Heart left ventricle (tissue), 16 donors: ENCODE measurements at regions of chr12 and their contacts with region 1.

Region 1: DNA sequence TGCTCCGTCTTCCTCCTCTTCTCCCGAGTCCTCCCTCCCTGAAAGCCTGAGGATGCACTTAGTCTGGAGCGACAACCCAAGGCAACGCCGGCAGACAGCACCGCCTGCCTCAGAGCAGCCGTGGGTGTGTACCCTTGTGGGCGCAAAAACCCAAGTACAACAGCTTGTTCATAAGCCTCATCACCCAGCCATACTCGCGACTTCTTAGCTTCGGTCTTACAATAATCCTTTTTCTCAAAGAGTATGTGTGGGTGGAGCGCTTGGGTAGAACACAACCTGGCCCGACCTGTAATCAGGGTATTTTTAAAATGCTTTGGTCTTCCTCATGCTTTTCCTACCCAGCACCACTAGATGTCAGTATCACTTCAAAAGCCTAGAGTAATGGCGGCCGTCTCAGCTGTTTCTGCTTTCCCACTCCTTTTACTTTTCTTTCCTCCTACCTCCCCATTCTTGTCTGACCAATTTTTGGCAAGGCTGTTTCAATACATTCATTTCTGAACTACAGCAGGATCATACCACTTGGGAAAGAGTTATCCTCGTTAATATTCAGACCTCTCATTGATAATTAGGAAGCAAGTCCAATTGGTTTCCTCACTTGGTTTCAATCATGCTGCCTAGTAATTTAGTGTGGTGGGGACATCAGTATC is 198.9 kb downstream of the EPS8 start:
- DNase-seq: peak; percentile 28 to 54 (median 36)
- ATAC-seq: peak; percentile 61 to 90 (median 89)
- H3K4me3 ChIP-seq: peak overlapping the region in 9 of 12 donors; percentile 22 to 47 (median 36)
- H3K27ac ChIP-seq: peak overlapping the region in 6 of 12 donors; percentile 5 to 60 (median 38)
- H3K4me1 ChIP-seq: peaks cover 0 to 8% (median 0%) of the 10 kb centered on the region in 12 donors
- H3K27me3 ChIP-seq: no peaks in the 10 kb centered on the region
- CTCF ChIP-seq: peak; percentile 83 to 98 (median 90)
- POLR2A ChIP-seq: no peak

Region 2: GRCh38 chr12:15151161-15152120 is 438.9 kb before region 1 on chr12:
- intact Hi-C with region 1: no loop called
- DNase-seq: peak in 1 of 5 donors; percentile 20
- ATAC-seq: peak; percentile 48 to 75 (median 60)
- H3K4me3 ChIP-seq: no peak overlapping the region
- H3K27ac ChIP-seq: peak overlapping the region in 8 of 12 donors; percentile 11 to 69 (median 46)
- H3K4me1 ChIP-seq: peaks cover 0 to 27% (median 7%) of the 10 kb centered on the region in 12 donors
- H3K27me3 ChIP-seq: no peaks in the 10 kb centered on the region
- CTCF ChIP-seq: peak; percentile 24 to 67 (median 47)
- POLR2A ChIP-seq: no peak

Region 3: DNA sequence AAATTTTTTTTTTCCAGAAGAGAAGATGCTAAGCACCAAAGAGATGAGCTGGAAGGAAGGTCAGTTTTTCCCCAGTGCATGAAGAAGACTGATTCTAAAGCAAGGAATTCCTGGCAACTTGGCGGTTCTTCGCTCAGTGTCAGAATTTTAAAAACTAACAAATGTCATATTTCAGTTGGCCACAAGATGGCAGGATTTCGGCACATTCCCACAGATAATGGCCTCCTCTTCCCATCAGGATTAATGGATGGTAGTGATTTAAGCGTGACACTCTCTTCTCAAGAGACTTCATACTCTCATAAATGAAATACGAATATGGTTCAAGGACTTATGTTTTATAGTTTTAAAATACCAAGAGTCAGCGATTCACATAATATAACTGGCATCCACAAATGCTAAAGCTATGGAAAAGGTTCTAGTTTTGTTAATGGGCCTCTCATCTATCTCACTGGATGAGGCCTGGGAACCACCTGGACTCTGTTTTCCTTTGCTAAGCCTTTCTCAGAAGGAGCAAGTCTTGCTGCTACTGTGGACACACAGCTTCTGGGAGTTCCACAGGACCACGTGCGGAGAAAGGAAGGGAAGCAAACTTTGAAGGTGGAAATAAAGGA is 314.1 kb before region 1 on chr12:
- intact Hi-C with region 1: loop called in 4 of 10 experiments (anchors 2 to 10 kb)
- DNase-seq: peak in 1 of 5 donors; percentile 14
- ATAC-seq: peak in 2 of 4 donors; percentile 49 to 61
- H3K4me3 ChIP-seq: no peak overlapping the region
- H3K27ac ChIP-seq: no peak overlapping the region
- H3K4me1 ChIP-seq: peaks cover 0 to 15% (median 11%) of the 10 kb centered on the region in 12 donors
- H3K27me3 ChIP-seq: peaks cover 0 to 8% (median 0%) of the 10 kb centered on the region in 9 donors
- CTCF ChIP-seq: peak; percentile 56 to 80 (median 72)
- POLR2A ChIP-seq: no peak

Region 4: DNA sequence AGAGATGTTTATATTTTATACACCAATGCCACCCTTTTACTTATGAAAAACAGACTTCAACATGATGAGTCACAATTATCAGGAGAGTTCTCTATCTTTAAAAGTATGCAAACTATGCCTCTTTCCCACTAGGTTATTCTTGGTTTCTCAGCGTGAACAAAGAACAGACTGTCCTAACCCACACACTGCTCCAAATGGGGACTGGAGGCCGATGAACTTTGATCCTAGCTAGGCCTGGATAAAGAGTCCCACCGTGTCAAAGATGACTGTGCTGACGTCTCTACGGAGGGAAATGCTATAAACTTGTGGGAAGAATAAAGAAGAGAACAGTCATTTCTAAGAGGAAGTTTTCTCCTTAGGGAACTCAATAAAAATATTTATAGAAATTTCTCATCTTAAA is 38.8 kb after region 1 on chr12:
- intact Hi-C with region 1: loop called in 3 of 10 experiments (anchors 2 to 5 kb)
- DNase-seq: peak in 4 of 5 donors; percentile 72 to 81 (median 76)
- ATAC-seq: peak; percentile 91 to 98 (median 98)
- H3K4me3 ChIP-seq: no peak overlapping the region
- H3K27ac ChIP-seq: peak overlapping the region; percentile 75 to 90 (median 82)
- H3K4me1 ChIP-seq: peaks cover 0 to 57% (median 28%) of the 10 kb centered on the region in 12 donors
- H3K27me3 ChIP-seq: no peaks in the 10 kb centered on the region
- CTCF ChIP-seq: no peak
- POLR2A ChIP-seq: no peak

Region 5: DNA sequence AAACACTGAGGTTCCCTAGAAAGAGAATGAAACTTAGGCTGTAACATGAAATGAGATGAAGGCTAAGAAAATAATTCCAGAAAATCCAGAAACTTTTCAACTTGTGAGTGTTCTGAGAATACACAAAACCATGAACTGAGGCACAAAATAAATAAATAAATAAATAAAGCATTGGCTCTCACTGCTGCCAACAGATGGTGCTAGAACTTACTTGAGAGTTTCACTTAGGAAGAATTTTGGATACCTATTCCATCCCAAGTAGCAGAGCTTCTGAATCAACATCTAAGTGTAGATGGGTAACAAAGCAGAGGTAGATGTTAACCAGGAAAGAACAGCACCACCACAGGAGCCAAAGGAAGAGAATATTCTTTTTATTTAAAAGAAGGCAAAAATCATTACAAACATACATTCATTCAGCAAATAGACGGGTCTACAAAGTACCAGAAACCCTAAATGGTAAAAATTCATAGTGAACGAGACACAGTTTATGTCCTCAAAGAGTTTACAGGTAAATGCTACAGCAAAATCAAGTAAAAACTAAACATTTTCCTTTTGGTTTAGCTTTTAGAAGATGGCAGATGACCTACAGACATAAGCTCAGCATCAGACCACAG is 182.2 kb after region 1 on chr12:
- intact Hi-C with region 1: loop called in 2 of 10 experiments (anchors 5 kb)
- DNase-seq: no peak
- ATAC-seq: no peak
- H3K4me3 ChIP-seq: no peak overlapping the region
- H3K27ac ChIP-seq: no peak overlapping the region
- H3K4me1 ChIP-seq: peaks cover 0 to 65% (median 3%) of the 10 kb centered on the region in 12 donors
- H3K27me3 ChIP-seq: no peaks in the 10 kb centered on the region
- CTCF ChIP-seq: peak; percentile 11 to 63 (median 33)
- POLR2A ChIP-seq: no peak